HepG2 (cell line): ENCODE measurements at regions of chr15 and their contacts with region 1.

Region 1: GRCh38 chr15:65304389-65305144 is at the start of gene RNU5B-1:
- DNase-seq: peak; percentile 93
- ATAC-seq: peak; percentile 62
- H3K4me3 ChIP-seq: peak within 1 kb of the TSS; percentile 62 to 81 (median 73)
- H3K27ac ChIP-seq: peak within 1 kb of the TSS; percentile 91
- H3K4me1 ChIP-seq: peaks cover 42% of the 10 kb centered on the region
- H3K27me3 ChIP-seq: no peaks in the 10 kb centered on the region; a peak in 1 of 5 replicates
- CTCF ChIP-seq: peak; percentile 78
- EP300 ChIP-seq: peak in 1 of 2 experiments; percentile 43; a peak in 2 of 4 replicates
- POLR2A ChIP-seq: peak; percentile 98 to 100
- RAD21 ChIP-seq: peak; percentile 63
- total RNA-seq, gene RNU5B-1: 417 and 1,646 TPM in 2 replicates

Region 2: DNA sequence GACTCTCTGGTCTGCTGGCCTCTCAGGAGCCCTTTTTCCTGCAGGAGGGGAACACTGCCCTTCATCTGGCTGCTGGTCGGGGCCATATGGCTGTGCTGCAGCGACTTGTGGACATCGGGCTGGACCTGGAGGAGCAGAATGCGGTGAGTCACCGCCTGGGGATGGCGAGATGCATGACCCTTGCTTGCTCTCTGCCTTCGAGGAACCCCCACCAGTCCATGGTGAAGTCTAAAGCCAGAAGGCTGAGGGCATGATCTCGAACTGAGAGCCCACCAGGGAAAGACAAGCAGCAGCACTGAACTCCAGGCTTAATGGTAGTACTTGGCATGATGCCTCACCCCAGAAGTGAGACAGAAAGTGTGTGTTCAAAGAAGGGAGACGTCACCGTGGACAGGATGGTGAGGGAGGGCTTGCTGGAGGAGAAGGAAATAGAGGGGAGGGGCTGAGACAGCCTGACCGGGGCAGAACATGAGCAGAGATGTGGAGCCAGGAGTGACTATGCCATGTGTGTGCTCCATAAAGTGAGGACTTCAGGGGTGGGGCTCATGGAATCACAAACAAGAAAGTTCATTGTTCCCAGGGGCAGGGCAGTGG is 373.7 kb before region 1 on chr15:
- CTCF ChIA-PET with region 1: no interaction called
- POLR2A ChIA-PET with region 1: no interaction called
- in situ Hi-C with region 1: no loop called
- intact Hi-C with region 1: no loop called
- DNase-seq: no peak
- ATAC-seq: peak; percentile 53
- H3K4me3 ChIP-seq: no peak overlapping the region
- H3K27ac ChIP-seq: no peak overlapping the region
- H3K4me1 ChIP-seq: peaks cover 13% of the 10 kb centered on the region
- H3K27me3 ChIP-seq: peaks cover 1 to 30% of the 10 kb centered on the region in 2 experiments; a peak in 3 of 5 replicates
- CTCF ChIP-seq: no peak
- EP300 ChIP-seq: no peak
- POLR2A ChIP-seq: no peak
- RAD21 ChIP-seq: no peak

Region 3: GRCh38 chr15:65184868-65185738 is 119.5 kb before region 1 on chr15 and contains the start of gene CLPX:
- CTCF ChIA-PET with region 1: interaction called, 5 read pairs
- POLR2A ChIA-PET with region 1: interaction called, 92 read pairs
- in situ Hi-C with region 1: loop called (anchors 5 kb)
- intact Hi-C with region 1: no loop called
- DNase-seq: peak; percentile 96
- ATAC-seq: peak; percentile 89
- H3K4me3 ChIP-seq: peak within 1 kb of the TSS; percentile 81 to 97 (median 90)
- H3K27ac ChIP-seq: peak within 1 kb of the TSS; percentile 92
- H3K4me1 ChIP-seq: peaks cover 53% of the 10 kb centered on the region
- H3K27me3 ChIP-seq: no peaks in the 10 kb centered on the region; a peak in 1 of 5 replicates
- CTCF ChIP-seq: no peak
- EP300 ChIP-seq: peak; percentile 23 to 41; a peak in 1 of 4 replicates
- POLR2A ChIP-seq: peak; percentile 80 to 89
- RAD21 ChIP-seq: no peak
- total RNA-seq, gene CLPX: 61.3 and 100 TPM in 2 replicates

Region 4: DNA sequence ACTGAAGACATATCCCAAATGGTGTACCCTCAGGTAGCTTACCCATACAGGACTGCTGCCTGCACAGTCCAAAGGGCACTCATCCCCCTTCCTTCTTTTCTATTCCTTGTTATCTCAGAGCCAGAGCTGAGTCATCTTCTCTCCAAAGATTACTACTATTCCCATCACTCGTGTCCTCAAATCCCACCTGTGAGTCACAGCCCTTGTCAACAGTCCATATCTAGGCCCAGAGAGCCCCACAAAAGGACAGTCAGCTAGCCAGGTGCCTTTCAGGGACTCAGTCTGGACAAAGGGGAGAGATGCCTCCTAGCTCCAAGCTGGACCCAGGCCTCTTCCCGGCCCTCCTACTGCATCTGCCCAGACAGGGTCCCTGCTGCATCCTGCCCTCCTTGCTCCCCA is 28.8 kb before region 1 on chr15:
- CTCF ChIA-PET with region 1: no interaction called
- POLR2A ChIA-PET with region 1: interaction called, 17 read pairs
- in situ Hi-C with region 1: no loop called
- intact Hi-C with region 1: no loop called
- DNase-seq: peak; percentile 74
- ATAC-seq: peak; percentile 62
- H3K4me3 ChIP-seq: no peak overlapping the region
- H3K27ac ChIP-seq: no peak overlapping the region
- H3K4me1 ChIP-seq: peaks cover 33% of the 10 kb centered on the region
- H3K27me3 ChIP-seq: no peaks in the 10 kb centered on the region
- CTCF ChIP-seq: no peak
- EP300 ChIP-seq: peak in 1 of 2 experiments; percentile 51; a peak in 2 of 4 replicates
- POLR2A ChIP-seq: no peak
- RAD21 ChIP-seq: no peak

Region 5: GRCh38 chr15:65355173-65355987 is 50.8 kb after region 1 on chr15:
- CTCF ChIA-PET with region 1: no interaction called
- POLR2A ChIA-PET with region 1: interaction called, 11 read pairs
- in situ Hi-C with region 1: no loop called
- intact Hi-C with region 1: no loop called
- DNase-seq: peak; percentile 29
- ATAC-seq: peak; percentile 81
- H3K4me3 ChIP-seq: peak overlapping the region; percentile 56 to 75 (median 57)
- H3K27ac ChIP-seq: peak overlapping the region; percentile 62
- H3K4me1 ChIP-seq: peaks cover 21% of the 10 kb centered on the region
- H3K27me3 ChIP-seq: no peaks in the 10 kb centered on the region
- CTCF ChIP-seq: no peak
- EP300 ChIP-seq: no peak
- POLR2A ChIP-seq: no peak
- RAD21 ChIP-seq: no peak

Region 6: GRCh38 chr15:65384895-65385858 is 80.6 kb after region 1 on chr15:
- CTCF ChIA-PET with region 1: no interaction called
- POLR2A ChIA-PET with region 1: interaction called, 18 read pairs
- in situ Hi-C with region 1: no loop called
- intact Hi-C with region 1: no loop called
- DNase-seq: peak; percentile 87
- ATAC-seq: peak; percentile 91
- H3K4me3 ChIP-seq: peak overlapping the region; percentile 44 to 80 (median 58)
- H3K27ac ChIP-seq: peak overlapping the region; percentile 71
- H3K4me1 ChIP-seq: peaks cover 42% of the 10 kb centered on the region
- H3K27me3 ChIP-seq: peaks cover 0 to 11% of the 10 kb centered on the region in 2 experiments; a peak in 2 of 5 replicates
- CTCF ChIP-seq: peak; percentile 98
- EP300 ChIP-seq: 0 out of 4 replicates have a peak, but pooled peaks have one; percentile 11 to 25
- POLR2A ChIP-seq: 0 out of 4 replicates have a peak, but pooled peaks of 1 of the 2 experiments have one; percentile 42
- RAD21 ChIP-seq: peak; percentile 96